Right ventricle myocardium superior (tissue), 1 donor: ENCODE measurements at regions of chr5 and their contacts with region 1.

Region 1: GRCh38 chr5:180860887-180861822 is at the start of gene ZFP62:
- DNase-seq: peak; percentile 93
- ATAC-seq: peak; percentile 98
- total RNA-seq, gene ZFP62: 16.6 TPM

Region 2: DNA sequence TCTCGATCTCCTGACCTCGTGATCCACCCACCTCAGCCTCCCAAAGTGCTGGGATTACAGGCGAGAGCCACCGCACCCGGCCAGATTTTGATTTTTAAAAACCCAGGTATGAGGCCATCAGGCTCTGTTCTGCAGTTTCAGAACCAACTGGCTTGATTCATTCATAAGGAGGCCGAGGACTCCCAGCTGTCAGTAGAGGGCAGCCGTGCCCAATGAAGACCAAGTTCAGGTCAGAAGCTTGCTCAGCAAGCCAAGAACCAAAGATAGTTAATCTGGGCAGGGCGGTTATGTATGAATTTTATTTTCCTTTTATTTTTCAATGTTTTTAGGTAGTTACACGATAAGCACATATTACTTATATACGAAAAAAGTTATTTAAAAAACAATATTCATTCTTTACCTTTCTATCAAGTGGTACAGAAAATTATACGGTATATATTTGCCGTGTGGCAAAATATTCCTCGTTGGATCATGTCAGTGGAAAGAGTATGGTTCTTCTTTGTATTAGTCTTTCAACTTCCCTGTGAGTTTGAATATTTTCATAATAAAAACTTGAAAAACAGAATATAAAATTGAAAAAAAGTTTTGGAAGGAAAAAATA is 76.6 kb before region 1 on chr5:
- intact Hi-C with region 1: loop called (anchors 2 kb)
- DNase-seq: peak; percentile 85
- ATAC-seq: peak; percentile 88

Region 3: DNA sequence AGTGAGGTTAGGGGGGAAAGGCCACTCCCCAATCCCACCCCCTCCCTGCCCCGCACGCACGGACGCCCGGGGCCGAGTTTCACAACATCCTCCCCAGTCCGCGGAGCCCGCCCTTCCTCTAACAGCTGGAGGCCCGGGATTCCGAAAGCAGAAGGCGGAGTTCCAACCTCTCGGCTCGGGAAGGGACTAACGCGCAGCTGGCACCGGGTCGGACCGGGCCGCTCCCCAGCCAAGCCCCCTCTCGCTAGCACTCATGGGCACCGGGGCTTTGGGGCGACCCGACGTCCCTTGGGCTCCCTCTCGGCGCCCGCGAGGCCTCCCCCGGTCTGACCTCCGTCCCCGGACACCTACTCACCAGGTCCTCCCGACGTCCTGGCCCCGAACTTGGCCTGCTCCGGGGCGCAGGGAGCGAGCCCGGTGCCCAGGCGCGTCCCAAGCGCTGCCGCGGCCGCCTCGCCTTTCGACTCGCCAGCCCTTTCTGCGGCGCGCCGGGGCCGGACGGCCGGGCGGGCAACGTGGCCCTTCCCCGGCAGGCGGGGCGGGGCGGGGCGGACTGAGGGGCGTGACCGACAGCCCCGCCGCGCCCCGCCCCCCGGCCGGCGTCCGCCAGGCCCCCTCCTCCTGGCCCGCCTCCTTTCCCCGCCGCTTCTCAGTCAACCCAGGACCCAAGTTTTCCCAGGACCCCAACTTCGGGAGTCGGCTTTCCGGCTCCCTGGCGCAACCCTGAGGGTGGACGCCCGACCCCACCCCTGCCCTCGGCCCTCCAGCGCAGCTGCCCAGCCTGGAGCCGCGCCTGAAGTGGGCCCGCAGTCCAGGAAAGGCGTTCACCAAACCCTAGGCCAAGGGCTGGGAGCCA is 58.6 kb before region 1 on chr5 and contains the start of gene MGAT1:
- intact Hi-C with region 1: loop called (anchors 5 kb)
- DNase-seq: peak; percentile 95
- ATAC-seq: peak; percentile 94
- total RNA-seq, gene MGAT1: 66.2 TPM

Region 4: GRCh38 chr5:180831139-180832048 is 29.8 kb before region 1 on chr5:
- intact Hi-C with region 1: no loop called
- DNase-seq: peak; percentile 94
- ATAC-seq: peak; percentile 98